ENCODE measurements at regions of chr11 and their contacts with region 1.

Region 1: DNA sequence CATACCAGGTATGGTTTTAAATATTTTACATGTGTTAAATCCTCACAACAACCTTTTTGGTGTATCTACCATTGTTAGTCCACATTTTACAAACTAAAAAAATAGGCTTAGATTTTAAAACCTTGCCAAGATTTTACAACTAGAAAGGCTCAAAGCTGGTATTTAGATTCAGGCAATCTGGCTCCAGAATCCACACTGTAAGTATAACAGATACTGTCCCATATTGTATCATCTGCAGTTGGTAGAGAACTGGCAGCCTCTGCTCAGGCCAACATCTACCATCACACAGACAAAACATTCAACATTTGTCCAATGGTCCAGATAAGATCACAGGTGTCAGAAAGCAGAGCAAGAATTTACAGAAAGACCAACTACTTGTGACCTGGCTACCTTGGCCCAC is 30.9 kb downstream of the CSNK2A3 start:
- DNase-seq: no peak

Region 2: DNA sequence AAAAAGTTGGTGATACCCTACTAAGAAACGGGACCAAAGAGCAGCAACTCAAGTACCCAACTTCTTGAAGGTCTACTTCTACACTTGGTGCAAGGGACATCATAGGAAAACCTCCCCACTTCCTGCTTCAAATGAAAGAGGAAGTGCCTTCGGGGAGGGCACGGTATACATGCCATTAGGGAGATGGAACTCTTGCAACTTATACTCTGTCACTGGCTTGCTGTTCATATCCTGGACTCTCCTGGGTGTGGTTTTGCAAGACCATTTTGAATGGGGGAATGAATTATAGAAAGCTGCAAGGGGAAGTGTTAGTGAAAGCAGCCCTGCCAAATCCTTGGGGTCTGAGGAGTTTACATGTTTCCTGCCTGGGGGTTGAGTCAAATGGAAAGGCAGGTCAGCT is 10.9 kb before region 1 on chr11:
- intact Hi-C with region 1: no loop called
- DNase-seq: no peak

Region 3: GRCh38 chr11:11366793-11367192 is 44.7 kb after region 1 on chr11:
- intact Hi-C with region 1: loop called in 1 of 2 experiments (anchors 2 kb)
- DNase-seq: no peak